Panc1 (cell line): ENCODE measurements at regions of chr6 and their contacts with region 1.

Region 1: GRCh38 chr6:22145823-22146677 is 150.8 kb downstream of the PRL start:
- DNase-seq: peak; percentile 25
- ATAC-seq: no peak
- H3K4me3 ChIP-seq: peak overlapping the region in 1 of 2 experiments; percentile 20; a peak in 1 of 4 replicates
- H3K27ac ChIP-seq: peak overlapping the region; percentile 67
- H3K4me1 ChIP-seq: peaks cover 47% of the 10 kb centered on the region
- H3K27me3 ChIP-seq: no peaks in the 10 kb centered on the region
- CTCF ChIP-seq: no peak; the same call in 1 of the 2 replicates

Region 2: GRCh38 chr6:21748343-21749056 is 397.6 kb before region 1 on chr6:
- CTCF ChIA-PET with region 1: no interaction called
- POLR2A ChIA-PET with region 1: no interaction called
- in situ Hi-C with region 1: no loop called
- intact Hi-C with region 1: loop called (anchors 10 kb)
- DNase-seq: no peak
- ATAC-seq: no peak
- H3K4me3 ChIP-seq: no peak overlapping the region
- H3K27ac ChIP-seq: peak overlapping the region; percentile 100
- H3K4me1 ChIP-seq: peaks cover 65% of the 10 kb centered on the region
- H3K27me3 ChIP-seq: no peaks in the 10 kb centered on the region
- CTCF ChIP-seq: no peak

Region 3: GRCh38 chr6:22113026-22113766 is 32.9 kb before region 1 on chr6:
- CTCF ChIA-PET with region 1: no interaction called
- POLR2A ChIA-PET with region 1: no interaction called
- in situ Hi-C with region 1: no loop called
- intact Hi-C with region 1: no loop called
- DNase-seq: peak; percentile 89
- ATAC-seq: no peak
- H3K4me3 ChIP-seq: no peak overlapping the region
- H3K27ac ChIP-seq: no peak overlapping the region
- H3K4me1 ChIP-seq: no peaks in the 10 kb centered on the region
- H3K27me3 ChIP-seq: no peaks in the 10 kb centered on the region
- CTCF ChIP-seq: no peak

Region 4: GRCh38 chr6:22828179-22829062 is 682.4 kb after region 1 on chr6:
- CTCF ChIA-PET with region 1: no interaction called
- POLR2A ChIA-PET with region 1: no interaction called
- in situ Hi-C with region 1: no loop called
- intact Hi-C with region 1: loop called (anchors 10 kb)
- DNase-seq: peak; percentile 74
- ATAC-seq: peak; percentile 87
- H3K4me3 ChIP-seq: peak overlapping the region; percentile 3 to 40; a peak in 2 of 4 replicates
- H3K27ac ChIP-seq: peak overlapping the region; percentile 72
- H3K4me1 ChIP-seq: peaks cover 20% of the 10 kb centered on the region
- H3K27me3 ChIP-seq: no peaks in the 10 kb centered on the region
- CTCF ChIP-seq: peak; percentile 92